ENCODE measurements at regions of chr7 and their contacts with region 1.

Region 1: GRCh38 chr7:133081599-133082389 is at the start of gene CHCHD3:
- DNase-seq: peak; percentile 92
- H3K4me3 ChIP-seq: peak within 1 kb of the TSS; percentile 97
- H3K27me3 ChIP-seq: no peaks in the 10 kb centered on the region
- CTCF ChIP-seq: no peak
- polyA plus RNA-seq, gene CHCHD3: 47.2 and 65.2 TPM in 2 replicates

Region 2: DNA sequence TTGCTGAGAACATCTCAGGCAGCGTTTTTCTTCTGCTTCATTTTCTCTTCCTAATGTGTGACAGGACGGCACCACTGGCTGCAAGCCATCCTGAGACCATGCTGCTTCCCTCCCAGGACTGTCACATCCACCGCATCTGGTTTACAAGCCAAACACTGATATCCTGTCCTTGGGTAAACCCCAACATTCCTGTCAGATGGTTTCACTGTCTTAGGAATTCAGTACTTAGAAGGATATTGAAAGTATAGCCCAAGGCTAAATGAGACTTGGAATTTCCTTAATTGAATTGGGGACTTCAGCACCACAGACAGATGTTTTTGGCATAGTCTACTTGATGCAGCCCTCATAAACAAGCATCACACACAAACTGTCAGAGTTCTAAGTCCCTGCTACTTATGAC is 431.3 kb before region 1 on chr7:
- CTCF ChIA-PET with region 1: no interaction called
- POLR2A ChIA-PET with region 1: no interaction called
- DNase-seq: peak; percentile 88
- H3K4me3 ChIP-seq: no peak overlapping the region
- H3K27me3 ChIP-seq: peaks cover 2% of the 10 kb centered on the region; the same call in 1 of the 2 replicates
- CTCF ChIP-seq: no peak

Region 3: DNA sequence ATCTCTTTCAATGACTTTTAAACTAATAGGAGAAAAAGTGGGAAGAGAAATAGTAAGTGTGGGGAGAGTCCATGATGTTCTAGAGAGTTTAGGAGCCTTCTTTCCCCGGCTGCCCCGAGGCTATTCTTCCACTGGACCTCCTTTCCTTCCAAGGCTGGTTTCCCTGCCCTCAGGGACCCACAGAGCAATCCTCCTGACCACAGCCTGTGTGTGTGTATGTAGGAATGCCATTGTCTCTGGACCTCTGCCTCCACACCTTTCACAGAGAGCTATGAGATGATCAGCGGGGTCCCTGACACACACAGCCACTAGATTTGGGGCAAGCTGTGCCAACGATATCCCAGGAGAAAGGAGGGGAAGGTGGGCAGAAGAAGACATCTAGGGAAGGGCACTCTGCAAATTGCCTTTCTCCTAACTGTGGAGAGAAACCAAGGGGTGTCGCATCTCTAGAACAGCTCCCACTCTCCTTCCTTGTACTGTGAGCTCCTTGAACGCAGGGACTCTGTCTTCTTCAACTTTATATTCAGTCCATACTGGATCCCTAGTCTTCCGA is 13.4 kb after region 1 on chr7:
- CTCF ChIA-PET with region 1: no interaction called
- POLR2A ChIA-PET with region 1: no interaction called
- DNase-seq: no peak
- H3K4me3 ChIP-seq: no peak overlapping the region
- H3K27me3 ChIP-seq: peaks cover 9% of the 10 kb centered on the region
- CTCF ChIP-seq: no peak

Region 4: DNA sequence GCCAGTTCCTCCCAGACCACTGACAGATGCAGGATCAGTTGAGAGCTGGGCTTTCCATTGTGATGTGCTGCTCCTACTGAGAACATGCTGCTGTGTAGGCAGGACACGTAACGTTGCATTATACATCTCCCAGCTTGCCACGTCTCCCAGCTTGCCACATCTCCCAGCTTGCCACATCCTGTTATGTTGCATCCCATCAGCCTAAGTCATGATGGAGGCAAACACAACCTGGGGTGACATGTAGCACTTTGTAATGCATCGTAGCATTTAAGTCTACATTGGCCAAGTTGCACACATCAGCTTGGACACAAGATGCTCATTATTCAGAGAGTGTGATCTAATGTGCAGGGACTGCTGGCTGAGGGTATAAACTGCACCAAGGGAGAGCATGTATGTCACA is 73.4 kb after region 1 on chr7:
- CTCF ChIA-PET with region 1: no interaction called
- POLR2A ChIA-PET with region 1: interaction called, 24 read pairs
- DNase-seq: no peak
- H3K4me3 ChIP-seq: no peak overlapping the region
- H3K27me3 ChIP-seq: no peaks in the 10 kb centered on the region
- CTCF ChIP-seq: no peak